Gastrocnemius medialis (tissue), 4 donors: ENCODE measurements at regions of chr13 and their contacts with region 1.

Region 1: GRCh38 chr13:41216160-41216559 is 21.8 kb upstream of the KBTBD7 start:
- DNase-seq: no peak
- ATAC-seq: no peak
- H3K4me3 ChIP-seq: no peak overlapping the region
- H3K27ac ChIP-seq: no peak overlapping the region
- H3K4me1 ChIP-seq: no peaks in the 10 kb centered on the region
- H3K27me3 ChIP-seq: no peaks in the 10 kb centered on the region
- CTCF ChIP-seq: no peak
- POLR2A ChIP-seq: no peak

Region 2: DNA sequence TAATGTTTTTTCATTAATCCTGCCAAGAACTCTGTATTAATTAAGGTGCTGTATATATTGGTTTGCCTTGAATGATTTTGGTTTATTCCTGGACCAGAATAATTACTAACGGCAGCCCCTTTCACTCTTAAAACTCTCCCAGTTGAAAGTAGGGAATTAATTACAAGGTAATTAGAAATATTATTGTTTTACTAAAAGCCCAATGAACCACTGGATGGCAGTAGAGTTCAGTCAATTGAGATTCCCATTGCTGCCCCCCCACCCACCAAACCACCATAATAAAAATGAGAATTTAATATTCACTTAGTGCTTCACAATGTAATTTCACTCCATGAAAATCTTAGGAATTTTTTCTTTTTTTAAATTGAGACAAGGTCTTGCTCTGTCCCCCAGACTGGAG is 141.1 kb before region 1 on chr13:
- in situ Hi-C with region 1: loop called in 3 of 4 experiments (anchors 5 to 10 kb)
- intact Hi-C with region 1: loop called (anchors 1 kb)
- DNase-seq: no peak
- ATAC-seq: no peak
- H3K4me3 ChIP-seq: no peak overlapping the region
- H3K27ac ChIP-seq: no peak overlapping the region
- H3K4me1 ChIP-seq: peaks cover 0 to 4% of the 10 kb centered on the region in 2 donors
- H3K27me3 ChIP-seq: no peaks in the 10 kb centered on the region
- CTCF ChIP-seq: peak; percentile 21 to 58 (median 42)
- POLR2A ChIP-seq: no peak

Region 3: GRCh38 chr13:41085961-41086585 is 130.1 kb before region 1 on chr13:
- in situ Hi-C with region 1: loop called in 1 of 4 experiments (anchors 10 kb)
- intact Hi-C with region 1: no loop called
- DNase-seq: no peak
- ATAC-seq: no peak
- H3K4me3 ChIP-seq: no peak overlapping the region
- H3K27ac ChIP-seq: no peak overlapping the region
- H3K4me1 ChIP-seq: no peaks in the 10 kb centered on the region
- H3K27me3 ChIP-seq: no peaks in the 10 kb centered on the region
- CTCF ChIP-seq: no peak
- POLR2A ChIP-seq: no peak